Naive thymus-derived CD4-positive, alpha-beta T cell (primary cell): ENCODE measurements at regions of chr5 and their contacts with region 1.

Region 1: DNA sequence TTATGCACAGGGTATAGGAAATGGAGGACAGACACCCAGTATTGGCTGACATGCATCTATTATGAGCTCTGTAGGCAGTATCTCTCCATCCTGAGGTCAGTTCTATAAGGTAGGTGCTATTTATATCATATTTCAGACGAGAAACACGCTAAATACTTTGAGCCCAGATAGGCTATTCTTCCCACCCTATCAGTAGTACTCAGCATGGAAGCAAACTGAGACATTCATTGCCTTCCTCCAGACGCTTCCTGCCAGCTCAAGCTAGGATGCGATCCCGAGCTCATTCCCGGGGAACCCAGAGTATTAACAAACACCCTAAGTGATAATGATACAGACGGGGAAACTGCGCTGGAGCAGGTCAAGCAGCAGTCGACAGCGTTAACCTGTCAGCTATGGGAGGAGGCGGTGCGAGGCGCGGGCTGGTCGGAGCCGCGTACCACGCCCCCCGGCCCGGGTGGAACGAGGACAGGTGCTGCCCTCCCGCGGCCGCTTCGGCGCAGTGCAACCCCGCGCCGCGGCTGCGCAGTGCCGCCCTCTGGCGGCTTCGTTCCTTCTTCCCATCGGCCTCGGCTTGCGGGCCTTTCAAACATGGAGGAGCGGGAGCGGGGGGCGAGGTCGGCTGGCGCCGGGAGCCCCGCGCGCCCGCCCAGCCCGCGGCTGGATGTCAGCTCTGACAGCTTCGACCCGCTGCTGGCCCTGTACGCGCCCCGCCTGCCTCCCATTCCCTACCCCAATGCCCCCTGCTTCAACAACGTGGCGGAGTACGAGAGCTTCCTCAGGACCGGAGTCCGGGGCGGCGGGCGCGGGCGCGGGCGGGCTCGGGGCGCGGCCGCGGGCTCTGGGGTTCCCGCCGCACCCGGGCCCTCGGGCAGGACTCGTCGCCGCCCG is at the start of gene LSM11:
- DNase-seq: peak; percentile 81 to 97 (median 89)
- ATAC-seq: peak; percentile 100
- H3K4me3 ChIP-seq: peak within 1 kb of the TSS; percentile 66
- H3K4me3 Mint-ChIP-seq: peak within 1 kb of the TSS; percentile 85 to 97 (median 93)
- H3K27ac ChIP-seq: peak within 1 kb of the TSS; percentile 74
- H3K27ac Mint-ChIP-seq: peak within 1 kb of the TSS; percentile 65 to 91 (median 82)
- H3K4me1 ChIP-seq: peaks cover 13% of the 10 kb centered on the region in 2 donors
- H3K4me1 Mint-ChIP-seq: peaks cover 7 to 42% (median 23%) of the 10 kb centered on the region in 7 donors
- H3K27me3 ChIP-seq: no peaks in the 10 kb centered on the region
- H3K27me3 Mint-ChIP-seq: no peaks in the 10 kb centered on the region
- total RNA-seq, gene LSM11: 1.6 to 5.0 (median 4.0) TPM

Region 2: GRCh38 chr5:156981481-156981880 is 761.9 kb before region 1 on chr5:
- CTCF ChIA-PET with region 1: no interaction called
- POLR2A ChIA-PET with region 1: no interaction called
- intact Hi-C with region 1: no loop called
- DNase-seq: no peak
- ATAC-seq: no peak
- H3K4me3 ChIP-seq: no peak overlapping the region
- H3K4me3 Mint-ChIP-seq: no peak overlapping the region
- H3K27ac ChIP-seq: no peak overlapping the region
- H3K27ac Mint-ChIP-seq: no peak overlapping the region
- H3K4me1 ChIP-seq: no peaks in the 10 kb centered on the region
- H3K4me1 Mint-ChIP-seq: peaks cover 0 to 7% (median 0%) of the 10 kb centered on the region in 7 donors
- H3K27me3 ChIP-seq: no peaks in the 10 kb centered on the region
- H3K27me3 Mint-ChIP-seq: no peaks in the 10 kb centered on the region

Region 3: GRCh38 chr5:157265714-157266285 is 477.6 kb before region 1 on chr5 and contains the start of gene CYFIP2:
- CTCF ChIA-PET with region 1: no interaction called
- POLR2A ChIA-PET with region 1: no interaction called
- intact Hi-C with region 1: loop called in 1 of 2 experiments (anchors 5 kb)
- DNase-seq: peak; percentile 68 to 85 (median 84)
- ATAC-seq: peak; percentile 94
- H3K4me3 ChIP-seq: peak within 1 kb of the TSS; percentile 83
- H3K4me3 Mint-ChIP-seq: peak within 1 kb of the TSS; percentile 95 to 99 (median 97)
- H3K27ac ChIP-seq: peak within 1 kb of the TSS; percentile 84
- H3K27ac Mint-ChIP-seq: peak within 1 kb of the TSS; percentile 95 to 99 (median 98)
- H3K4me1 ChIP-seq: peaks cover 41 to 57% of the 10 kb centered on the region in 2 donors
- H3K4me1 Mint-ChIP-seq: peaks cover 51 to 76% (median 72%) of the 10 kb centered on the region in 7 donors
- H3K27me3 ChIP-seq: no peaks in the 10 kb centered on the region
- H3K27me3 Mint-ChIP-seq: no peaks in the 10 kb centered on the region
- total RNA-seq, gene CYFIP2: 386 to 449 (median 401) TPM

Region 4: DNA sequence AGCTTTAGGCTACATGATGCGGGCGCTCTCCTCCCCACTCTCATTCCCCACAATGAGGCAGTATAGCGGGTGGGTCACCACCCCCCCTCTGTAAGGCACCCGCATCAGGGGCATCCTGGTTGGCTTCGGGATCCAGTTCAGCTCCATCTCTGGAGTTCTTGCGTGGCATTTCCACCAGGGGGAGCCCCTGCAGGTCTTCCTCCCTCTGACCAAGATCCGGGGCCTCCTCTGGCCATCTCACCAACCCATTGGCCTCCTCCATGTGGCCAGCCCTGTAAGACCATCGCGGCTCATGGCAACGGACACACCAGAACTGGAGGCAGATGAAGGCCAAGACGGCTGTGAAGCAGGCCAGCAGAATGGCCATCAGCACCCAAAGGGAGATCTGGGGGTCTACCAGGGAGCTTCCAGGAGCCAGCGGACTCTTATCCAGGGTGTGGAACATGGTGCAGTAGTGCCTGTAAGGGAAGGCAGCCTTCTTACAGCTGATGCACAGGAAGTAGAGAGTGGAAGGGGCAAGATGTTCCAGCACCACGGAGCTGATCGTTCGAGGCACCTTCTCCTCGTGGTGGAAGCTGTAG is 400.5 kb before region 1 on chr5:
- CTCF ChIA-PET with region 1: interaction called, 9 read pairs
- POLR2A ChIA-PET with region 1: no interaction called
- intact Hi-C with region 1: loop called (anchors 1 to 5 kb)
- DNase-seq: peak in 3 of 9 donors; percentile 13 to 49 (median 19)
- ATAC-seq: peak; percentile 65
- H3K4me3 ChIP-seq: no peak overlapping the region
- H3K4me3 Mint-ChIP-seq: no peak overlapping the region
- H3K27ac ChIP-seq: no peak overlapping the region
- H3K27ac Mint-ChIP-seq: peak overlapping the region in 4 of 9 donors; percentile 19 to 39 (median 24)
- H3K4me1 ChIP-seq: no peaks in the 10 kb centered on the region
- H3K4me1 Mint-ChIP-seq: peaks cover 5 to 23% (median 15%) of the 10 kb centered on the region in 7 donors
- H3K27me3 ChIP-seq: no peaks in the 10 kb centered on the region
- H3K27me3 Mint-ChIP-seq: no peaks in the 10 kb centered on the region

Region 5: GRCh38 chr5:157390551-157391297 is 352.7 kb before region 1 on chr5:
- CTCF ChIA-PET with region 1: no interaction called
- POLR2A ChIA-PET with region 1: no interaction called
- intact Hi-C with region 1: loop called in 1 of 2 experiments (anchors 1 kb)
- DNase-seq: peak in 1 of 9 donors; percentile 55
- ATAC-seq: peak; percentile 68
- H3K4me3 ChIP-seq: no peak overlapping the region
- H3K4me3 Mint-ChIP-seq: peak overlapping the region in 2 of 10 donors; percentile 41 to 66
- H3K27ac ChIP-seq: no peak overlapping the region
- H3K27ac Mint-ChIP-seq: peak overlapping the region in 8 of 9 donors; percentile 34 to 89 (median 54)
- H3K4me1 ChIP-seq: peaks cover 0 to 6% of the 10 kb centered on the region in 2 donors
- H3K4me1 Mint-ChIP-seq: peaks cover 0 to 35% (median 4%) of the 10 kb centered on the region in 7 donors
- H3K27me3 ChIP-seq: no peaks in the 10 kb centered on the region
- H3K27me3 Mint-ChIP-seq: no peaks in the 10 kb centered on the region

Region 6: GRCh38 chr5:157476702-157477408 is 266.6 kb before region 1 on chr5:
- CTCF ChIA-PET with region 1: no interaction called
- POLR2A ChIA-PET with region 1: no interaction called
- intact Hi-C with region 1: loop called in 1 of 2 experiments (anchors 5 kb)
- DNase-seq: peak in 5 of 9 donors; percentile 14 to 34 (median 17)
- ATAC-seq: peak; percentile 60
- H3K4me3 ChIP-seq: no peak overlapping the region
- H3K4me3 Mint-ChIP-seq: no peak overlapping the region
- H3K27ac ChIP-seq: no peak overlapping the region
- H3K27ac Mint-ChIP-seq: peak overlapping the region in 1 of 9 donors; percentile 56
- H3K4me1 ChIP-seq: no peaks in the 10 kb centered on the region
- H3K4me1 Mint-ChIP-seq: peaks cover 0 to 79% (median 0%) of the 10 kb centered on the region in 7 donors
- H3K27me3 ChIP-seq: no peaks in the 10 kb centered on the region
- H3K27me3 Mint-ChIP-seq: no peaks in the 10 kb centered on the region

Region 7: DNA sequence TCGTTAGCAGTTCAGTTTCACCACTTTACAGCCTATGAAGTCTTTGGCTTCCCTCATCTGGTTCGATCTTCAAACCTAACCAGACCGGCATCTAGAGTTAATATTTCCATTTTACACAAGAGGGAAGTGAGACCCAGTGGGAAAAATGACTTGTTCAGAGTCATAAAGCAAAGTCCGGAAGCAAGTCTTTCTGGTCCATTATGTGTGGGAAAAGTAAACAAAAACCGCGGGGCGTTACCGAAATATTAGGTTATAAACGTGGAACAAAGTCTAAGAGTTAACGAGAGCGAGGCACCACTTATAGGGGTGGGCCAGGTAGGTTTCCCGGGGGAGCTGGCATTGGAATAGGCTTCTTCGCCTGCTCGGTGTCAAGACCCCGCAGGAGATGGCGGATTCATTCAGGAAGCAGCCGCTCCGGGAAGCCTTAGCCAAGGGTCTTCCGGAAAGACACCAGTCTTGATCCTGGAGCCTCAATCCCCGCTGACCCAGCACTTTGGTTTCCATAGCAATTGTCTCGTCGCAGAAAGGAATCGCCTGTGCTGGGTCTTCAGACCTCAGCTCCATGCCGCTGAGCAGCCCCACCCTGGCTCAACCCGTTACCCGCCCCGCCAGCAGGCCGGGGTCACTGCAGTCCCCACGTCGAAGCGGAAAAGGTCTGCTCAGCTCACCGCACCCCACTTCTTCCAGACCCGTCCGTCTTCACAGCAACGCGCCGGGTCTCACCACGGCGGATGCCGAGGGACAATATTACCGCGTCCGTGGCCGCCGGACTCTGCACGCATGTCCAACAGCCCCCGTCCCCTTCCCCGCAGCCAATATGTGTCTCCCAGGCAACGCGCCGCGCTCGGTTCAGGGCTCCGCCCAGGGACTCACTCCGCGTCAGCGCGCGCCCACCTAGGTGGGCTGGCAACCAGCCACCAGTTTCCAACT is 72.5 kb before region 1 on chr5 and contains the start of gene C5orf52:
- CTCF ChIA-PET with region 1: interaction called, 14 read pairs
- POLR2A ChIA-PET with region 1: no interaction called
- intact Hi-C with region 1: loop called (anchors 1 kb)
- DNase-seq: peak in 1 of 9 donors; percentile 52
- ATAC-seq: peak; percentile 41
- H3K4me3 ChIP-seq: peak within 1 kb of the TSS; percentile 38
- H3K4me3 Mint-ChIP-seq: peak within 1 kb of the TSS; percentile 69 to 95 (median 82)
- H3K27ac ChIP-seq: no peak within 1 kb of the TSS
- H3K27ac Mint-ChIP-seq: peak within 1 kb of the TSS in 4 of 9 donors; percentile 4 to 85 (median 22)
- H3K4me1 ChIP-seq: peaks cover 0 to 8% of the 10 kb centered on the region in 2 donors
- H3K4me1 Mint-ChIP-seq: peaks cover 16 to 31% (median 25%) of the 10 kb centered on the region in 7 donors
- H3K27me3 ChIP-seq: peaks cover 0 to 15% of the 10 kb centered on the region in 2 donors
- H3K27me3 Mint-ChIP-seq: peaks cover 25 to 49% (median 44%) of the 10 kb centered on the region in 5 donors
- total RNA-seq, gene C5orf52: not detected

Region 8: DNA sequence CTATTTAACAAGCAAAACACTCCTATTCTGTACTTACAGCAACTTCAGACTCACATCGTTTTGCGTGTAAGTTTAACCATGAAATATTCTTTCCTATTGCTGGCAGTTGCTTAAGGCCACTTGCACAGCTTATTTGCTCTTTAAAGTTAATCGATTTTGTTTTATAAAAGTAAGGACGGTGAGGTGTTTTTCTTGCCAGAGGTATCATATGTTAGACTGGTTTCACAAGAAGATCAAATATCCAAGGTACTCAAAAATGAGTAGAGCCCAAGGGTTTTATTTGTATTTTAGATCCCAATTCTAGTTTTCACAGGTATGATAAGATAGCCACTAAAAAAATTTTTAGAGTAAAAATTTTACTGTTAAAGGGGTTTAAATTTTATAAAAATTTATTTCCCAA is 99.4 kb after region 1 on chr5:
- CTCF ChIA-PET with region 1: no interaction called
- POLR2A ChIA-PET with region 1: no interaction called
- intact Hi-C with region 1: no loop called
- DNase-seq: no peak
- ATAC-seq: no peak
- H3K4me3 ChIP-seq: no peak overlapping the region
- H3K4me3 Mint-ChIP-seq: no peak overlapping the region
- H3K27ac ChIP-seq: no peak overlapping the region
- H3K27ac Mint-ChIP-seq: peak overlapping the region in 1 of 9 donors; percentile 59
- H3K4me1 ChIP-seq: peaks cover 0 to 8% of the 10 kb centered on the region in 2 donors
- H3K4me1 Mint-ChIP-seq: peaks cover 9 to 45% (median 34%) of the 10 kb centered on the region in 7 donors
- H3K27me3 ChIP-seq: no peaks in the 10 kb centered on the region
- H3K27me3 Mint-ChIP-seq: no peaks in the 10 kb centered on the region

Region 9: GRCh38 chr5:159262859-159263567 is 1519.6 kb after region 1 on chr5 and contains the start of gene UBLCP1:
- CTCF ChIA-PET with region 1: no interaction called
- POLR2A ChIA-PET with region 1: no interaction called
- intact Hi-C with region 1: loop called in 1 of 2 experiments (anchors 5 kb)
- DNase-seq: peak; percentile 65 to 88 (median 83)
- ATAC-seq: peak; percentile 91
- H3K4me3 ChIP-seq: peak within 1 kb of the TSS; percentile 76
- H3K4me3 Mint-ChIP-seq: peak within 1 kb of the TSS; percentile 89 to 99 (median 96)
- H3K27ac ChIP-seq: peak within 1 kb of the TSS; percentile 90
- H3K27ac Mint-ChIP-seq: peak within 1 kb of the TSS; percentile 97 to 100 (median 99)
- H3K4me1 ChIP-seq: peaks cover 8 to 17% of the 10 kb centered on the region in 2 donors
- H3K4me1 Mint-ChIP-seq: peaks cover 28 to 65% (median 52%) of the 10 kb centered on the region in 7 donors
- H3K27me3 ChIP-seq: no peaks in the 10 kb centered on the region
- H3K27me3 Mint-ChIP-seq: peaks cover 0 to 4% (median 0%) of the 10 kb centered on the region in 5 donors
- total RNA-seq, gene UBLCP1: 18.2 to 30.9 (median 30.2) TPM